ENCODE measurements at regions of chr4 and their contacts with region 1.

Region 1: DNA sequence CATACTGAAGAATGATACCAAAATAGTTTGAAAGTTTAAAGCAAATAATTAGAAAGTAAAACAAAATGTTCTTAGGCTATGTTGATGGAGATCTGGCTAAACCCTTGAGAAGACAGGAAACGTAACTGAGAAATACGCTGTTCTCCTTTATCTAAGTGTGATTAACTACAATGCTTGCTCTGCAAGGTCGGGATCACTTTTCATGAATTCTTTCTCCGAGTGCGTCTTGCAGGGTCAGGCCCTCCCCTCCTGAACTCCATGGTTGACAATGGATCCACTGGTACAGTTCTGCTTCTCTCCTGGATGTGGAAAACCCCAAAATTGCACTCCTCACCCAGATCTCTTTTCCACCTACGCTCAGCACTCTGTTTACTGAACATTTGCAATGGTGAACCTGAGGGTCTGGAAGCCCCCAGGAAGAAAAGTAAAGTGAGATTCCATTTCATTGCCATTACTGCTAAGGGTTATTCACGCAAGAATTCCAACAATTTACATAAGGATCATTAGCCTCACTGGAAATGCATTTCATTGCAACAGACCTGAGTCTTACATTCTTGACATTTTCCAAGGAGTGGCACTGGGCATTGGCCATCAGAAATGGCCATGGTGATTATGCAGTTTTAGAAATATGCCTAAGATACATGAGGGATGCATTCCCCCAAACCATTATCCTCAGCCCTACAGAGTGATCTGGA is 24.6 kb upstream of the WWC2 start:
- DNase-seq: no peak
- H3K4me3 ChIP-seq: no peak overlapping the region
- H3K27ac ChIP-seq: no peak overlapping the region
- H3K4me1 ChIP-seq: no peaks in the 10 kb centered on the region
- H3K27me3 ChIP-seq: no peaks in the 10 kb centered on the region
- CTCF ChIP-seq: no peak
- EP300 ChIP-seq: no peak
- POLR2A ChIP-seq: no peak

Region 2: DNA sequence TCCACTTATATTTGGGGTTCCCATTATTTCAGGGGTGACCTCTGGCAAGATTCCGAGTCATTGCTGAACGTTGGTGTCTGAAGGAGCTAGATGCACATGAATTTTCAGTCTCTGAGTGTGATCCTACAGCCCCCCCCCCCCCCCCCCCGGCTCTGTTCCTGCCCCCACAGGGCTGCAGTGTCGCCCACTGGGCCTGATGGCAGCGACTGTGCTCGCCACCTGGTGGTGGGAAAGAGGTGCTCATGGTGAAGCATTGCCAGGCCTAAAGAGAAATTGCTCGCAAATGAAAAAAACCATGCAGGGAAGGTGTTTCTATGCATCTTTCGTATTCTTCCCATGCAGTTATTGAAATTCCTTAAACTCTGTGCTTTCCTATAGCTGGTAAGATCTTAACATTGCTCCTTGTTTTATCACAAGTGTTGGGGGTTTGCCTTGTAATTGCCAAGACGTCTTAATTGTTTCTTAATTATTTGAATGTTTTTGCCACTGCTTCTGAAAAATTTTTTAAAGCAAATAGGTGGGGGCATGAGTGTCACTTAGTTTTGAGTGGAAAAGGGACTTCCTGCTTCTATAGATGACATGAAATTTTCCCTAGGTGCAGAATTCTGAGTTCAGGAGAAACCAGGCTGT is 182.4 kb after region 1 on chr4:
- in situ Hi-C with region 1: loop called (anchors 5 to 10 kb)
- intact Hi-C with region 1: loop called (anchors 2 kb)
- DNase-seq: peak; percentile 38
- H3K4me3 ChIP-seq: no peak overlapping the region
- H3K27ac ChIP-seq: peak overlapping the region in 1 of 4 donors; percentile 4
- H3K4me1 ChIP-seq: peaks cover 0 to 43% (median 11%) of the 10 kb centered on the region in 4 donors
- H3K27me3 ChIP-seq: no peaks in the 10 kb centered on the region
- CTCF ChIP-seq: peak; percentile 41 to 77 (median 66)
- EP300 ChIP-seq: no peak
- POLR2A ChIP-seq: no peak

Region 3: GRCh38 chr4:183261953-183262775 is 187.7 kb after region 1 on chr4:
- in situ Hi-C with region 1: loop called (anchors 5 to 10 kb)
- intact Hi-C with region 1: loop called (anchors 2 kb)
- DNase-seq: peak; percentile 88
- H3K4me3 ChIP-seq: no peak overlapping the region
- H3K27ac ChIP-seq: peak overlapping the region; percentile 45 to 72 (median 56)
- H3K4me1 ChIP-seq: peaks cover 7 to 21% (median 12%) of the 10 kb centered on the region in 4 donors
- H3K27me3 ChIP-seq: no peaks in the 10 kb centered on the region
- CTCF ChIP-seq: peak; percentile 71 to 82 (median 76)
- EP300 ChIP-seq: no peak
- POLR2A ChIP-seq: no peak

Region 4: DNA sequence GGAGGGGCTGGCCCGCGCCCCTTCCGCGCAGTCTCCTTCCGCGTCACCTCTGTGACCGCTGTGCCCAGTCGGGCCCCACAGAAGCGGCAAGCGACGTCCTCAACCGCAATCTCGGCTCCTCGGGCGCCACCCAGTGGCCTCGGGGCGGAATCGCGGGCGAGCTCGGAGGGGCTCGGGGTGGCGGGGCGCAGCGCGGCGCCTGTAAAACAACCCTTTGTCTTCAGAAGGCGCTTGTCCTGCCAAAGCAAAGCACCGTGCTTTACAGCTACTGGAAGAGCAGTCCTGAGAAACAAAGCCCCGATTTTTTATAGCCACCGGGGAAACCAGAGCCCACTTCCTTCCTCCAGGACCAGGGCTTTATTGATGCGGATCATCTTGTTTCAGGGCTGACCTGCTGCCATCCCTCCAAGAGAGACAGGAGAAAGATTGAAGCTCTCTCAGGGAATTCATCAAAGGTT is 332.7 kb after region 1 on chr4:
- in situ Hi-C with region 1: loop called in 2 of 4 experiments (anchors 10 to 25 kb)
- intact Hi-C with region 1: no loop called
- DNase-seq: peak; percentile 89
- H3K4me3 ChIP-seq: peak overlapping the region; percentile 38 to 54 (median 46)
- H3K27ac ChIP-seq: peak overlapping the region; percentile 56 to 77 (median 68)
- H3K4me1 ChIP-seq: peaks cover 0 to 14% (median 9%) of the 10 kb centered on the region in 4 donors
- H3K27me3 ChIP-seq: no peaks in the 10 kb centered on the region
- CTCF ChIP-seq: peak; percentile 90 to 98 (median 96)
- EP300 ChIP-seq: no peak
- POLR2A ChIP-seq: peak; percentile 12